ENCODE measurements at regions of chr11 and their contacts with region 1.

Region 1: DNA sequence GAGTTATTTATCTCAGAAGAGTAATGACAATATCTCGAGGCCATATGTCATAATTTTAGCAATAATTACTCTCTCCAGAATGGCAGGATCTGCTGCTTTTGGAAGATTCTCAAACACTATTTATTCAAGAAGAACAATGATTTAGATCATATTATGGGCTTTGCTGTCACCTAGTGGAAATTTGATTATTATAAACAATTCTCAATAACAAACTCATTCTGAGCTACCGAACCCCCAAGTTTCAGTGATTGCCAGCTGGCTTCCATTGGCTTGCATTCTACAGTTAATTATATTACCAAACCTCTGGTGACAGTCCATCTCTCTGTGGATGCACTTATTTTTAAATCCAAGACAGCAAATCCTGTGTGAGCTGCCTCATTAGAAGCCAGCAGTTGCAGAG is 27.9 kb upstream of the SLC36A4 start:
- DNase-seq: peak in 2 of 9 experiments; percentile 32 to 45
- ATAC-seq: no peak
- H3K4me3 ChIP-seq: no peak overlapping the region
- H3K4me3 Mint-ChIP-seq: no peak overlapping the region
- H3K27ac ChIP-seq: no peak overlapping the region
- H3K27ac Mint-ChIP-seq: no peak overlapping the region
- H3K4me1 ChIP-seq: no peaks in the 10 kb centered on the region
- H3K4me1 Mint-ChIP-seq: no peaks in the 10 kb centered on the region
- H3K27me3 ChIP-seq: no peaks in the 10 kb centered on the region
- H3K27me3 Mint-ChIP-seq: peaks cover 6% of the 10 kb centered on the region
- CTCF ChIP-seq: peak; percentile 58

Region 2: DNA sequence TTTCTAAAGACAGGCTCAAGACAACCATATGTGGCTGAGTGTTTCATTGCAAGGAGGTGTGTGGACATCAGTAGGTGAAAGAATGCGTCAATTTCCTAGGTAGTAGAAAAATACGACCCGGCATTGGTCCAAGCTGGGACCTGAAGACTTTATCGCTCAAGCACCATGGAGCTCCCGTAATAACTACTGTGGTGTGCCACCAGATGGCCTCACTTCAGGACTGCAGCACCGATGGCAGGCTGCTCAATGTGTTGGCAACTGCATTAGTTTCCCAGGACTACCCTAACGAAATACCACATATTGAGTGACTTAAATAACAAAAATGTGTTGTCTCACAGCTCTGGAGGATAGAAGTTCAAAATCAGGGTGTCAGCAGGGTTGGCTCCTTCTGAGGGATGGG is 1073.4 kb before region 1 on chr11:
- CTCF ChIA-PET with region 1: no interaction called
- POLR2A ChIA-PET with region 1: no interaction called
- intact Hi-C with region 1: loop called in 1 of 2 experiments (anchors 5 kb)
- DNase-seq: no peak
- ATAC-seq: no peak
- H3K4me3 ChIP-seq: no peak overlapping the region
- H3K4me3 Mint-ChIP-seq: no peak overlapping the region
- H3K27ac ChIP-seq: no peak overlapping the region
- H3K27ac Mint-ChIP-seq: no peak overlapping the region
- H3K4me1 ChIP-seq: no peaks in the 10 kb centered on the region
- H3K4me1 Mint-ChIP-seq: no peaks in the 10 kb centered on the region
- H3K27me3 ChIP-seq: no peaks in the 10 kb centered on the region
- H3K27me3 Mint-ChIP-seq: no peaks in the 10 kb centered on the region
- CTCF ChIP-seq: no peak

Region 3: DNA sequence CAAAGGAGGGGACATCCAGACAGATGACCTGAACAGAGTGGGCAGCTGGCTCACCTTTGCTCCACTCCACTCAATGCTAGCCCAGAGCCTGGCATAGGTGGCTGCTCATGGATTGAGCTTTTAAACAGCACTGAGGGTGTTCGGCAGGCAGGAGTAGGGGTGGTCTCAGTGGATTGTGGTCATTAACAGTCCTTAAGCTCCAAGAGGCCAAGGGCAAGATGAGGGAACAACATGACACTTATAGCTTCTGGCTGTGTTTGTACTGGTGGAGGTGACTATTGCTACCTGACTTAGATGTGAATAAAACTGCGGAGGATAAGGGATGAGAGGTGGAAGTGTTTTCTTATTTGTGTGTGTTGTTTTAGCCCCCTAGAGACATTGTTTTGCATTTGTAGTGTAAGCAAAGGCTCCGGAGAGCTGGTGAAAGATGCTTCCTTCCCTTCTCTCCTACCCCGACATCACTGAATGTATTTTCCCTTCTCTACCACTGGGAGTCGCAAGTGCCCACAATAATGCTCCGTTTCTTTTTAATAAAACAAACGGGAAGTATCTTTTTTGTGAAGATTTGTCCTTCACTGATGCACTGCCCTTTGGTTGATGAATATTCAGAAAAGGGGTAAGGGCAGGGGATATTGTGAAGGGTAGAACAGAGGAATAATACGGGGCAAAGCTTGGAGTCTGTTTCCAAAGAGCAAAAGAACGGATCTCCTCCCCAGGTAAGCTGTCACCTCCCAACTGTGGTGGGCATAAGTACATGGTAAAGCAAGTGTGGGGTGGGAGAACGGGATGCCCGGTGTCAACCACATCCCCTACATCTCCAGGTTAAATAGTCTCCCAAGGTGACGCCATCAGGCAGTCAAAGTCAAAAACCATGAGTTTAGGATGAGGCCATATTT is 283.7 kb before region 1 on chr11:
- CTCF ChIA-PET with region 1: interaction called, 19 read pairs
- POLR2A ChIA-PET with region 1: no interaction called
- intact Hi-C with region 1: loop called (anchors 1 to 2 kb)
- DNase-seq: peak in 2 of 9 experiments; percentile 10 to 22
- ATAC-seq: no peak
- H3K4me3 ChIP-seq: no peak overlapping the region
- H3K4me3 Mint-ChIP-seq: no peak overlapping the region
- H3K27ac ChIP-seq: no peak overlapping the region
- H3K27ac Mint-ChIP-seq: no peak overlapping the region
- H3K4me1 ChIP-seq: no peaks in the 10 kb centered on the region
- H3K4me1 Mint-ChIP-seq: no peaks in the 10 kb centered on the region
- H3K27me3 ChIP-seq: no peaks in the 10 kb centered on the region
- H3K27me3 Mint-ChIP-seq: peaks cover 5% of the 10 kb centered on the region
- CTCF ChIP-seq: peak; percentile 30